ENCODE measurements at regions of chr13 and their contacts with region 1.

Region 1: GRCh38 chr13:42969558-42970172 is 22.4 kb downstream of the EPSTI1 start:
- DNase-seq: peak; percentile 83 to 91
- H3K4me3 ChIP-seq: no peak overlapping the region
- H3K4me3 Mint-ChIP-seq: peak overlapping the region; percentile 4
- H3K27ac Mint-ChIP-seq: peak overlapping the region; percentile 34
- H3K4me1 ChIP-seq: peaks cover 77% of the 10 kb centered on the region
- H3K4me1 Mint-ChIP-seq: peaks cover 49% of the 10 kb centered on the region
- H3K27me3 ChIP-seq: no peaks in the 10 kb centered on the region
- H3K27me3 Mint-ChIP-seq: no peaks in the 10 kb centered on the region
- CTCF ChIP-seq: peak; percentile 82 to 94

Region 2: DNA sequence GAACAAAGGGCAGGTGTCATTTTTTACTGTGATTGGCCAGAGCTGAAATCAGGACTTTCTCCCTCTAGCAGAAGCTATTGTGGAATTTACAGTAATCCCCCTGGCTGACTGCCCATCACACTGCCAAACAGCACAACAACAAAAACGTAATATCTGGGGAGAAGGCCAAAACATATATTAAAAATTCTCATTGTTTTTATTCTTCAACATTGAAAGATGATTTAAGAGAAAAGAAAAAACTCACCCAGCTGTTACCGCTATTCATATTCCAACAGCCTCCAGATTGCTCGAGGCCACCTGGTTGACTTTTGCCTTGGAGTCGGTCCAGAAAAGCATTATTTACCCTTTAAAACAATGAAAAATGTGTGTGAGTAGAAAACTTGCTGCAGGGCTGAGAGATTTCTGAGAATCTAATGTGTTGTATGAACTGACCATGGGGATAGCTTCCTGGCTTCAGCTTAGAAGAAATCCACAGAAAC is 74.9 kb before region 1 on chr13:
- CTCF ChIA-PET with region 1: no interaction called
- POLR2A ChIA-PET with region 1: no interaction called
- intact Hi-C with region 1: no loop called
- DNase-seq: no peak
- H3K4me3 ChIP-seq: no peak overlapping the region
- H3K4me3 Mint-ChIP-seq: no peak overlapping the region
- H3K27ac Mint-ChIP-seq: no peak overlapping the region
- H3K4me1 ChIP-seq: peaks cover 21% of the 10 kb centered on the region
- H3K4me1 Mint-ChIP-seq: peaks cover 5% of the 10 kb centered on the region
- H3K27me3 ChIP-seq: no peaks in the 10 kb centered on the region; the same call in 1 of the 2 replicates
- H3K27me3 Mint-ChIP-seq: no peaks in the 10 kb centered on the region
- CTCF ChIP-seq: no peak

Region 3: DNA sequence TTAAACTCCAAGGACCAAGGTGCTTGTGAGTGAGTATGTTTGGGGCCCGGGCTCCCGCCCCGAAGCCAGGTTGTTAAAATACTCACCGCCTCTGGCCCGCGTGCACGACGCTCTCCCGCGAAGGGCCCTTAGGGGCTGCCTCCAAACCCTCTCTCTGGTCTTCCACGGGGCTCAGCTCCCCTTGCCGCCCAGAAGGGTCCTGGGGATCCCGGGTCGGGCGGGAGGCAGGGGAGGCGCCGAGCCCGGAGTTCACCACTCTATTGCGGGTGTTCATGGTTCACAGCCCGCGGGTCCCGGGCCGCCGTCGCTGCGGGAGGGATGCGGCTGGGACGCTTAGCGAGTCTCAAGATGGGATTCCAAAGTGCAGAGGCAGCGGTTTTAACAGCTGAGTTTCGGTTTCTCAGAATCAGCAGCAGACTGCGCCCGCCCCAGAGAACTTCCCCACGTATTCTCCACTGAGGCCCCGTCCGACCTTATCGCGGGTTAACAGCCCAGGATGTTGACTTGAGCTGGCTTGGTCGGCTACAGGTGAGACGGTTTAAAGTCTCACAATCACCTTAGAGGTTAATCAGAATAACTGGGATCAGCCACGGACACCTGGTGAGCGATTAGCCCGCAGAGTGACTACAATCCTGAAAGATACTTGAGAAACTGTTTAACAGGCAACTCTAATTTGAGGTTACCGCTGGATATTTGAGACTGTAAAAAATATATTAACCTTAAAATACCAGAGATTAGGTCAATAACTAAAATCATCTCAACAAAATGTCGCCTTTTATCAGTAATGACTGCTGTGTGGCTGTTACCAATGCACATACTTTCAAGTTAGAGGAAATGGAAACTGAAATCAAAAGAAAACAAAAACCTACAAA is 22.5 kb after region 1 on chr13 and contains the start of gene EPSTI1:
- CTCF ChIA-PET with region 1: interaction called, 11 read pairs
- POLR2A ChIA-PET with region 1: interaction called, 7 read pairs
- intact Hi-C with region 1: loop called (anchors 2 kb)
- DNase-seq: peak; percentile 84 to 92
- H3K4me3 ChIP-seq: peak within 1 kb of the TSS; percentile 59
- H3K4me3 Mint-ChIP-seq: peak within 1 kb of the TSS; percentile 91
- H3K27ac Mint-ChIP-seq: peak within 1 kb of the TSS; percentile 91
- H3K4me1 ChIP-seq: peaks cover 49% of the 10 kb centered on the region
- H3K4me1 Mint-ChIP-seq: peaks cover 33% of the 10 kb centered on the region
- H3K27me3 ChIP-seq: no peaks in the 10 kb centered on the region
- H3K27me3 Mint-ChIP-seq: no peaks in the 10 kb centered on the region
- CTCF ChIP-seq: no peak
- total RNA-seq, gene EPSTI1: 80.6 and 86.5 TPM in 2 replicates

Region 4: DNA sequence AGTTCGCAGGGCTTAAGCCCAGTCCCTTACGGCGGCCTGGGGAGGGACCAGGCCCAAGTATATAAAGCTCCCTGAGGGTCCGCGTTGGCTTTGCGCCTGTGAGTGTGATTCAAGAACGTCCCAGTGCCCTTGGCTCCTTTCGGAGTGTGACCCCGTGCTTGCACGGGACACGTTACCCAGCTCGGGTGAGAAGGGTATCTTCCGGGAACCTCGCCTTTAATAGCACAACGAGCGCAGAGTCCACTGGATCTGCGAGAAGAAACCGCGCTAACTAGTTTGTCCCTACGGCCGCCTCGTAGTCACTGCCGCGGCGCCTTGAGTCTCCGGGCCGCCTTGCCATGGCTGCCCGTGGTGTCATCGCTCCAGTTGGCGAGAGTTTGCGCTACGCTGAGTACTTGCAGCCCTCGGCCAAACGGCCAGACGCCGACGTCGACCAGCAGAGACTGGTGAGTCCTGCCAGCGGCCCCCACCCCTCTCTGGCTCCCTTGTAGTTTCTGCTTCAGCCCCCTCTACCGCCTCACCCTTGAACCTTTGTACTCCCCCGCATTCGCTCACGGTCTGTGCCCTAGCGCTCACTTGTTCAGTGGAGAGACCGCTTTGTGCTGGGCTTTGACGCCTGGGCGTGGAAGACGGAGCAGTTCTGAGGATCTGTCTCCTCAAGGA is 53.8 kb after region 1 on chr13 and contains the start of gene DNAJC15:
- CTCF ChIA-PET with region 1: interaction called, 3 read pairs
- POLR2A ChIA-PET with region 1: no interaction called
- intact Hi-C with region 1: loop called (anchors 5 kb)
- DNase-seq: peak; percentile 83 to 87
- H3K4me3 ChIP-seq: peak within 1 kb of the TSS; percentile 57
- H3K4me3 Mint-ChIP-seq: peak within 1 kb of the TSS; percentile 95
- H3K27ac Mint-ChIP-seq: peak within 1 kb of the TSS; percentile 93
- H3K4me1 ChIP-seq: peaks cover 21% of the 10 kb centered on the region
- H3K4me1 Mint-ChIP-seq: peaks cover 12% of the 10 kb centered on the region
- H3K27me3 ChIP-seq: no peaks in the 10 kb centered on the region
- H3K27me3 Mint-ChIP-seq: no peaks in the 10 kb centered on the region
- CTCF ChIP-seq: no peak
- total RNA-seq, gene DNAJC15: 71.0 and 72.2 TPM in 2 replicates

Region 5: DNA sequence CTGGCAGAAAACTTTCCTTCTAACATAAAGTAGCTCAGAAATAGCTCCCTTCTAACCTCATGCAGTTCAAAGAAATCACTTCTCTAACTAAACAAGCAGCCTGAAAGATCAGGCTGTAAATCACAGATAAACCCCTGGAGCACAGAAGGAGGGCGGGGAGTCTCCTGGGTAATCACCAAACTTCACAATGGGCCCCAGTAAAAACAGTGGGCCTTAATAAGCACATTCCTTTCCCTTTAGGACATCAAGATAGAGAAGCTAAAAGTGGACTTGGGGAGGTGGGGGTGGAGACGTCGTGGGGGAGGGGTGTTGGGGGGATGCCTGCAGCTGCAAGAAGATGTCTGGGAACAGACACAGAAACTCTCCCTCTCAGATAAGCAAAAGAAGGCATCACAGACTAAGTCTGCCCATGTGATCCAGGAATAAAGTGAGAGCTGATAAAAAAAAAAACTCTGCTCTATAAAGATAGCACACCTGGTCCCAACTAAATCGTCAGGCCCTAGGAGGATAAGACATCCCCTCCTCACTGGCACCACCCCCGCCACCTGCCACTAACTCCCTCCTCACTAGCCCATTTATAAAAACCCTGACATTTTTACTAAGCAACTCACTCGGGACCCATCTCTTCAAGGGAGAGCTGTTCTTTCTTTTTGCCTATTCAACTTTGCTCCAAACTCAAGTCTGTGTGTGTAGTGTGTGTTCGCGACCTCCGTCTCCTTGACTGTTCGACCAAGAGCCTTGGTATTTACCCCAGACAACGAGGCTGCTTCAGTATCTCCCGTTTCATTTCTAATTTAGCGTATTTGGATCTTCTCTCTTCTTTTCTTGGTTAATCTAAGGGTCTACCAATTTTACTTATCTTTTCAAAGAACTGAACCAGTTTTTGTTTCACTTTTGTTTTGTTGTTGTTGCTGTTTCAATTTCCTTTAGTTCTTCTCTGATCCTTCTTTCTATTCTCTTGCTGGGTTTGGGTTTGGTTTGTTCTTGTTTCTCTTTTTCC is 85.4 kb after region 1 on chr13:
- CTCF ChIA-PET with region 1: interaction called, 18 read pairs
- POLR2A ChIA-PET with region 1: interaction called, 4 read pairs
- intact Hi-C with region 1: loop called (anchors 2 kb)
- DNase-seq: peak; percentile 93 to 95
- H3K4me3 ChIP-seq: peak overlapping the region; percentile 35
- H3K4me3 Mint-ChIP-seq: no peak overlapping the region
- H3K27ac Mint-ChIP-seq: no peak overlapping the region
- H3K4me1 ChIP-seq: peaks cover 58% of the 10 kb centered on the region
- H3K4me1 Mint-ChIP-seq: peaks cover 14% of the 10 kb centered on the region
- H3K27me3 ChIP-seq: no peaks in the 10 kb centered on the region
- H3K27me3 Mint-ChIP-seq: no peaks in the 10 kb centered on the region
- CTCF ChIP-seq: no peak

Region 6: DNA sequence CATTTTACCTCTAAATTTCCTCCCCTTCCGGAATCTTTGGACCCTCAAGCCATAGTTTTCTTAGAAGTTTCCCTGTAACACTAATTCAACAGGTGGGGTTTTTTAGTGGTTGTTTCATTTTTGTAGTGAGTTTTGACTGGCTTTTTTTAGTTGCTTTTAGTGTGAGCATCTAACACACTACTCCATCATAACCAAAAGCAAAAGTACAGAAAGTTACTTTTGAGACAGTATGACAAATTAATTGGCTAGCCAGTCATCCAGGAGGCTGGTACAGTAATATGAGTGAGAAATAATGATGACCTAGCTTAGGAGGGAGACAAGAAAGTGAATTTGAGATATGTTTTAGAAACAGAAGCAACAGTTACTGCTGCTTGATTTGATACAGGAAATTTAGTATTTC is 125.2 kb after region 1 on chr13:
- CTCF ChIA-PET with region 1: no interaction called
- POLR2A ChIA-PET with region 1: no interaction called
- intact Hi-C with region 1: no loop called
- DNase-seq: no peak
- H3K4me3 ChIP-seq: no peak overlapping the region
- H3K4me3 Mint-ChIP-seq: no peak overlapping the region
- H3K27ac Mint-ChIP-seq: peak overlapping the region; percentile 8
- H3K4me1 ChIP-seq: no peaks in the 10 kb centered on the region
- H3K4me1 Mint-ChIP-seq: peaks cover 21% of the 10 kb centered on the region
- H3K27me3 ChIP-seq: no peaks in the 10 kb centered on the region
- H3K27me3 Mint-ChIP-seq: no peaks in the 10 kb centered on the region
- CTCF ChIP-seq: no peak

Region 7: GRCh38 chr13:43132257-43132656 is 162.6 kb after region 1 on chr13:
- CTCF ChIA-PET with region 1: interaction called, 6 read pairs
- POLR2A ChIA-PET with region 1: no interaction called
- intact Hi-C with region 1: loop called (anchors 2 kb)
- DNase-seq: peak; percentile 75 to 81
- H3K4me3 ChIP-seq: no peak overlapping the region
- H3K4me3 Mint-ChIP-seq: no peak overlapping the region
- H3K27ac Mint-ChIP-seq: no peak overlapping the region
- H3K4me1 ChIP-seq: peaks cover 14% of the 10 kb centered on the region
- H3K4me1 Mint-ChIP-seq: peaks cover 21% of the 10 kb centered on the region
- H3K27me3 ChIP-seq: no peaks in the 10 kb centered on the region; the same call in 1 of the 2 replicates
- H3K27me3 Mint-ChIP-seq: no peaks in the 10 kb centered on the region
- CTCF ChIP-seq: peak; percentile 56 to 74